ENCODE measurements at regions of chr14 and their contacts with region 1.

Region 1: GRCh38 chr14:104976198-104977007 is 1.8 kb downstream of the AHNAK2 start:
- DNase-seq: peak in 1 of 2 experiments; percentile 90
- H3K4me3 ChIP-seq: no peak overlapping the region
- H3K27ac ChIP-seq: no peak overlapping the region
- H3K4me1 ChIP-seq: peaks cover 0 to 11% (median 9%) of the 10 kb centered on the region in 4 experiments; a peak in 5 of 7 replicates
- H3K27me3 ChIP-seq: peaks cover 18 to 38% (median 31%) of the 10 kb centered on the region in 4 experiments
- CTCF ChIP-seq: peak in 2 of 3 experiments; percentile 85 to 93; a peak in 3 of 4 replicates
- EP300 ChIP-seq: no peak
- POLR2A ChIP-seq: no peak
- RAD21 ChIP-seq: peak; percentile 73 to 85

Region 2: GRCh38 chr14:104895786-104896661 is 80.4 kb before region 1 on chr14:
- CTCF ChIA-PET with region 1: interaction called, 10 read pairs
- POLR2A ChIA-PET with region 1: interaction called, 3 read pairs
- DNase-seq: peak in 1 of 2 experiments; percentile 46
- H3K4me3 ChIP-seq: no peak overlapping the region
- H3K27ac ChIP-seq: no peak overlapping the region
- H3K4me1 ChIP-seq: peaks cover 0 to 3% (median 0%) of the 10 kb centered on the region in 4 experiments; a peak in 1 of 7 replicates
- H3K27me3 ChIP-seq: no peaks in the 10 kb centered on the region
- CTCF ChIP-seq: no peak
- EP300 ChIP-seq: no peak
- POLR2A ChIP-seq: no peak
- RAD21 ChIP-seq: no peak

Region 3: GRCh38 chr14:104933746-104934733 is 42.4 kb before region 1 on chr14:
- CTCF ChIA-PET with region 1: interaction called, 11 read pairs
- POLR2A ChIA-PET with region 1: no interaction called
- DNase-seq: no peak
- H3K4me3 ChIP-seq: peak overlapping the region; percentile 11 to 51 (median 27); a peak in 6 of 8 replicates
- H3K27ac ChIP-seq: no peak overlapping the region
- H3K4me1 ChIP-seq: peaks cover 0 to 12% (median 8%) of the 10 kb centered on the region in 4 experiments; a peak in 5 of 7 replicates
- H3K27me3 ChIP-seq: peaks cover 27 to 83% (median 57%) of the 10 kb centered on the region in 4 experiments
- CTCF ChIP-seq: no peak
- EP300 ChIP-seq: no peak
- POLR2A ChIP-seq: no peak
- RAD21 ChIP-seq: no peak

Region 4: GRCh38 chr14:104950021-104950420 is 26.4 kb before region 1 on chr14:
- CTCF ChIA-PET with region 1: no interaction called
- POLR2A ChIA-PET with region 1: no interaction called
- DNase-seq: no peak
- H3K4me3 ChIP-seq: no peak overlapping the region
- H3K27ac ChIP-seq: no peak overlapping the region
- H3K4me1 ChIP-seq: no peaks in the 10 kb centered on the region
- H3K27me3 ChIP-seq: no peaks in the 10 kb centered on the region
- CTCF ChIP-seq: no peak
- EP300 ChIP-seq: no peak
- POLR2A ChIP-seq: no peak
- RAD21 ChIP-seq: no peak

Region 5: GRCh38 chr14:104965561-104966231 is 10.7 kb before region 1 on chr14:
- CTCF ChIA-PET with region 1: interaction called, 24 read pairs
- POLR2A ChIA-PET with region 1: interaction called, 5 read pairs
- DNase-seq: no peak
- H3K4me3 ChIP-seq: no peak overlapping the region
- H3K27ac ChIP-seq: no peak overlapping the region
- H3K4me1 ChIP-seq: peaks cover 0 to 25% (median 15%) of the 10 kb centered on the region in 4 experiments; a peak in 6 of 7 replicates
- H3K27me3 ChIP-seq: peaks cover 0 to 13% (median 6%) of the 10 kb centered on the region in 4 experiments; a peak in 3 of 7 replicates
- CTCF ChIP-seq: no peak
- EP300 ChIP-seq: no peak
- POLR2A ChIP-seq: no peak
- RAD21 ChIP-seq: no peak

Region 6: DNA sequence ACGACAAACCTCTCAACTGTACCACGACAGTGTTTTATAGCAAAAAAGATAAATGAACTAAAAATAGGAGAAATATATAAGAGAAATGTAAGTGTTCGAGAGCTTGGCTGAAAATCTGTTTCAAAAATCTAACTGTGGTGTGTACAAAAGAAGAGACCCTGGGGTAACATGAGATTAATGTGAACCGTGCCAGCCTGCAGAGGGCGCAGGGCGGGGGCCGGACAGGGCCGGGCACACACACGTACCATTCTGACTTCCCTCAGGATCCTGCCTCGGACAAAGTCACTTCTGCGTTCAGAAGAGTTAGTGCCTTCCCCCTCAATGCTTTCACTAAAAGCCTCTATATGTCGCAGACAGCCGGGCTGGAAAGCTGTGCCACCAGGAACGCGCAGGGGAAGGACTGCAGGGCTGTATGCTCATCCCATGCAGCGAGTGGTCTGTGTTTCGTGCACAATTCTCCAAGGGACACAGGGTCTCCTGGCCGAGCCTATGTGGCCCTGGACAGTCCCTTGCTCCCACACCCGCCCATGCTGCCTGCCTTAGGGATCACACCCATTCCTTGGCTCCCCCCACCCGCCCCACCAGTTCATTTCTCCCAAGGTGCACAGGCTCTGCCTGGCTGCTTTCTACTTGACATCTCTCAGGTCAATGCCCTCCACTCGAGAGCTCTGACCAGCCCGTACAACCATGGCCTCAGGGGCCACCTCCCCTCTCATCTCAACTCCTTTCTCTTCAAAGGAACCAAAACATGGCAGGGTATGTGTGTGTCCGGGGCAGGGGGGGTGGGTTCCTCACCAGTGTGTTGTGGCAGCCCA is 36.0 kb after region 1 on chr14:
- CTCF ChIA-PET with region 1: interaction called, 10 read pairs
- POLR2A ChIA-PET with region 1: no interaction called
- DNase-seq: no peak
- H3K4me3 ChIP-seq: no peak overlapping the region
- H3K27ac ChIP-seq: no peak overlapping the region; the same call in 1 of the 2 replicates
- H3K4me1 ChIP-seq: peaks cover 4 to 10% (median 7%) of the 10 kb centered on the region in 4 experiments; a peak in 6 of 7 replicates
- H3K27me3 ChIP-seq: no peaks in the 10 kb centered on the region
- CTCF ChIP-seq: peak; percentile 9 to 28 (median 17); a peak in 3 of 4 replicates
- EP300 ChIP-seq: no peak
- POLR2A ChIP-seq: no peak
- RAD21 ChIP-seq: no peak

Region 7: DNA sequence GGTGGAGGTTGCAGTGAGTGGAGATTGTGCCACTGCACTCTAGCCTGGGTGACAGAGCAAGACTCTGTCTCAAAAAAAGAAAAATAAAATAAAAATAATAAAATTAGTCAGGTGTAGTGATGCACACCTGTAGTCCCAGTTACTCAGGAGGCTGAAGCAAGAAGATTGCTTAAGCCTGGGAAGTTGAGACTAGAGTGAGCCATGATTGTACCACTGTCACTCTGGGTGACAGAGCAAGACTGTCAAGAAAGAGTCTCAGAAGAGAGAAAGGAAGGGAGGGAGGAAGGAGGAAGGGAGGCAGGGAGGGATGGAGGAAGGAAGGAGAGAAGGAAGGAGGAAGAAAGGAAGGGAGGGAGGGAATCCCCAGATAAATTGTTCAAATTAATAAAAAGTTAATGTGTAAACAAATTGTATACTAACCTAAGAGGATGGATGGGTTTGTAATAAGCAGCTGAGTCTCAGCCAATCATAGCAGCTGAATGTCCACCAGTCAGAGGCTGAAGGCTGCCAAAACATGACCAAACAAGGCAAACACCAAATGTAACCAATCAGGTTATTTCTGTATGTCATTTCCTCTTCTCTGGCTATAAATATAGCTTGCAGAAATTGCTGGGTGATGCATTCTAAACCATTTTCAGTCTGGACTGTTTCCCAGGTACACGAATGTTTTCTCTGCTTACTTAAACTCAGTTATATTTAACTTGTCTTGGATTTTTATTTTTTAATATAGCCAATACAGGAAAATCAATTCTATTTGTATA is 50.6 kb after region 1 on chr14:
- CTCF ChIA-PET with region 1: interaction called, 11 read pairs
- POLR2A ChIA-PET with region 1: no interaction called
- DNase-seq: no peak
- H3K4me3 ChIP-seq: no peak overlapping the region
- H3K27ac ChIP-seq: no peak overlapping the region
- H3K4me1 ChIP-seq: no peaks in the 10 kb centered on the region; a peak in 1 of 7 replicates
- H3K27me3 ChIP-seq: peaks cover 0 to 4% (median 1%) of the 10 kb centered on the region in 4 experiments; a peak in 3 of 7 replicates
- CTCF ChIP-seq: no peak
- EP300 ChIP-seq: no peak
- POLR2A ChIP-seq: no peak
- RAD21 ChIP-seq: no peak

Region 8: GRCh38 chr14:105107781-105108515 is 131.5 kb after region 1 on chr14:
- CTCF ChIA-PET with region 1: no interaction called
- POLR2A ChIA-PET with region 1: no interaction called
- DNase-seq: no peak
- H3K4me3 ChIP-seq: no peak overlapping the region
- H3K27ac ChIP-seq: no peak overlapping the region
- H3K4me1 ChIP-seq: no peaks in the 10 kb centered on the region
- H3K27me3 ChIP-seq: no peaks in the 10 kb centered on the region; a peak in 1 of 7 replicates
- CTCF ChIP-seq: no peak
- EP300 ChIP-seq: no peak
- POLR2A ChIP-seq: no peak
- RAD21 ChIP-seq: no peak

Measured in H1 (cell line).